Caco-2 (cell line): ENCODE measurements at regions of chr18 and their contacts with region 1.

Region 1: DNA sequence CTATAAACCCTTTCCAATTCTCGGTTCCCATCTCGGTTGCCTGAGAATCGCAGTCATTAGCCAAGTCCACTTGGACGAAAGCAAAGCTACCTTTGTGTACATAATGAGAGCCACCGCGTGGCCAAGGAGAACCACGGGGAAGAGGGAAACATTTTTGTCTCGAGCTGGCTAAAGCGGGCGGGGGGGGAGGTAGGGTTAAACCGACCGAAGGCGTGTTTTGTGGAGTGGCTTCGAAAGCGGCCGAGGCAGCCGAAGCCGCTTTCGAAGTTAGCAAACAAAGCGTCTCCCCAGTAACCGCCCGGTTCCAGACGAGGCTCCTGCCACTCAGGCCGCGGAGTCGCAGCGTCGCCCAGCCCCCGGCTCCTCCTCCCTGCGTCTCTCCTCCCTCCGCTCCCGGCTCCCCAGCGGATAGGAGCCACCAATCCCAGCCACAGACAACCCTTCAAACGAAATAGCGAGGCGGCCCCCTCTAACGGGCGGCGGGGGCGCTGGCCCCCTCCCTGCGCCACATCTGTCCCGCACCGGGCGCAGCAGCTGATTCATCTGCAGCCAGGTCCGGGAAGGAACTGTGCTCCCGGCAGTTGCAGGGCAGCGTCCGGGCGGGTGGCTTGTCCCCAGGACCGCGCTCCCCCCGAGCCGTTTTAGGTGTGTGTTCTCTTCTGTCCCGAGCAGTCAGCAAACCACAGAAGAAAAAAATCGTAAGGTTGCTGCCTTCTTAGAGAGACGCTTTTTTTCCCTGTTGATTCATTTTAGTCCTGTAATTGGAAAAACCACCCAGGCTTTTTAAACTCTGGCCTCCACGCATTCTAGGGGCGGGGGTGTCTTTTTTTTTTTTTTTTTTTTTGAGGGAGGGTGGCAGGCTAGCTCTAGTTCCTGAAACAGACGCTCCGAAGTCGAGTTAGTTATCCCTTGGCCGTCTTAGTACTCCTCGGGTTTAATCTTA is 1.8 kb upstream of the TGIF1 start:
- DNase-seq: peak; percentile 97
- H3K4me3 ChIP-seq: peak overlapping the region; percentile 60
- H3K4me3 Mint-ChIP-seq: peak overlapping the region; percentile 87
- H3K27ac Mint-ChIP-seq: peak overlapping the region; percentile 97
- H3K4me1 ChIP-seq: peaks cover 14% of the 10 kb centered on the region
- H3K4me1 Mint-ChIP-seq: no peaks in the 10 kb centered on the region
- H3K27me3 ChIP-seq: no peaks in the 10 kb centered on the region
- H3K27me3 Mint-ChIP-seq: no peaks in the 10 kb centered on the region
- CTCF ChIP-seq: peak in 1 of 2 experiments; percentile 48

Region 2: GRCh38 chr18:2857491-2858131 is 590.6 kb before region 1 on chr18:
- CTCF ChIA-PET with region 1: no interaction called
- POLR2A ChIA-PET with region 1: interaction called, 5 read pairs
- intact Hi-C with region 1: loop called (anchors 10 kb)
- DNase-seq: peak in 1 of 2 experiments; percentile 57
- H3K4me3 ChIP-seq: no peak overlapping the region
- H3K4me3 Mint-ChIP-seq: no peak overlapping the region
- H3K27ac Mint-ChIP-seq: peak overlapping the region; percentile 65
- H3K4me1 ChIP-seq: peaks cover 54% of the 10 kb centered on the region
- H3K4me1 Mint-ChIP-seq: peaks cover 41% of the 10 kb centered on the region
- H3K27me3 ChIP-seq: no peaks in the 10 kb centered on the region
- H3K27me3 Mint-ChIP-seq: no peaks in the 10 kb centered on the region
- CTCF ChIP-seq: no peak

Region 3: GRCh38 chr18:3329471-3329870 is 118.7 kb before region 1 on chr18:
- CTCF ChIA-PET with region 1: no interaction called
- POLR2A ChIA-PET with region 1: no interaction called
- intact Hi-C with region 1: loop called (anchors 2 kb)
- DNase-seq: peak in 1 of 2 experiments; percentile 67
- H3K4me3 ChIP-seq: no peak overlapping the region
- H3K4me3 Mint-ChIP-seq: peak overlapping the region; percentile 55
- H3K27ac Mint-ChIP-seq: peak overlapping the region; percentile 88
- H3K4me1 ChIP-seq: peaks cover 26% of the 10 kb centered on the region
- H3K4me1 Mint-ChIP-seq: peaks cover 28% of the 10 kb centered on the region
- H3K27me3 ChIP-seq: no peaks in the 10 kb centered on the region
- H3K27me3 Mint-ChIP-seq: no peaks in the 10 kb centered on the region
- CTCF ChIP-seq: no peak

Region 4: GRCh38 chr18:3397071-3397745 is 51.0 kb before region 1 on chr18:
- CTCF ChIA-PET with region 1: no interaction called
- POLR2A ChIA-PET with region 1: interaction called, 11 read pairs
- intact Hi-C with region 1: no loop called
- DNase-seq: peak in 1 of 2 experiments; percentile 35
- H3K4me3 ChIP-seq: no peak overlapping the region
- H3K4me3 Mint-ChIP-seq: no peak overlapping the region
- H3K27ac Mint-ChIP-seq: peak overlapping the region; percentile 58
- H3K4me1 ChIP-seq: peaks cover 12% of the 10 kb centered on the region
- H3K4me1 Mint-ChIP-seq: peaks cover 17% of the 10 kb centered on the region
- H3K27me3 ChIP-seq: no peaks in the 10 kb centered on the region
- H3K27me3 Mint-ChIP-seq: no peaks in the 10 kb centered on the region
- CTCF ChIP-seq: no peak

Region 5: DNA sequence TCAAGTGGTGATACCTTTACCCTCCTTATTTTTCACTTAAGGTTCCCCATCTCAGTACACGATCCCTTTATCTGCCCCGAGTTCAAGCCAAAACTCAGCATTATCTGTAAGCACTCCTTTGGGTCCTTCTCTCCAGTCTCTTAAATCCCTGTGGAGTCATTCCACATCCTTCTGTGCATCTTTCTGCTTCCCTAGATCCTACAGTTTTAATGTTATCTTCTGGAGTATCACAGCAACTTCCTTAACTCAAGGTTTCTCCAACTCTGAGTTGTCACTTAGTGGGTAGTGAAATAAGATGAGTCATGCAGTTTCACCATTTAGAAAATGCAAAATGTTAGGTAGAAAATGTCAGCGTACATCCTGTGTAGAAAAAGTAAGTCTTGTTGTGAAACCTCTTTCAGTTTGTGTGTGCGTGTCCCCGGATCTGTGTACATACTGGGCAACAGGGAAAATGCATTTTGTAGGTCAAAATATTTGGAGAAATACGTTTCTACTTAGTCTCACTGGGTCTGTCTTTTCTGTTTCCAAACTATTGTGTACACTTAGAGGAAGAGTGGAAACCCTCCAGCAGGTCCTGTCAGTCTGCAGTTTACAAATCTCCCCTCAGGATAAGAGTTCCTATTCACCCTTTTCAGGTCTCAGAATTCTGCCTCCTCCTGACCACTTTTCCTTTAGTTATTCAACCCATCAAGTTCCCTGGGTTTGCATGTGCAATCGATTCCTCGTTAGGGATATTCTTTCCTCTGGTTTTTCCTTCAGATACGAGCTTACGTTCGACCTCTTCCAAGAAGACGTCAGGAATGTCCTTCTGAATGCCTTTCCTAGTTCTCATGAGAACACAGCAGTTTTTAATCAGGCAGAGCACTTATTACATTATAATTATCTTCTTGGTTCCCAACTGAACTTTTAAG is 156.6 kb after region 1 on chr18:
- CTCF ChIA-PET with region 1: no interaction called
- POLR2A ChIA-PET with region 1: interaction called, 30 read pairs
- intact Hi-C with region 1: loop called (anchors 2 kb)
- DNase-seq: peak in 1 of 2 experiments; percentile 53
- H3K4me3 ChIP-seq: peak overlapping the region; percentile 50
- H3K4me3 Mint-ChIP-seq: no peak overlapping the region
- H3K27ac Mint-ChIP-seq: no peak overlapping the region
- H3K4me1 ChIP-seq: peaks cover 35% of the 10 kb centered on the region
- H3K4me1 Mint-ChIP-seq: peaks cover 15% of the 10 kb centered on the region
- H3K27me3 ChIP-seq: no peaks in the 10 kb centered on the region
- H3K27me3 Mint-ChIP-seq: no peaks in the 10 kb centered on the region
- CTCF ChIP-seq: no peak